Activated CD4-positive, alpha-beta memory T cell treated with anti-CD3 and anti-CD28 coated beads for 36 hours (primary cell): ENCODE measurements at regions of chr17 and their contacts with region 1.

Region 1: DNA sequence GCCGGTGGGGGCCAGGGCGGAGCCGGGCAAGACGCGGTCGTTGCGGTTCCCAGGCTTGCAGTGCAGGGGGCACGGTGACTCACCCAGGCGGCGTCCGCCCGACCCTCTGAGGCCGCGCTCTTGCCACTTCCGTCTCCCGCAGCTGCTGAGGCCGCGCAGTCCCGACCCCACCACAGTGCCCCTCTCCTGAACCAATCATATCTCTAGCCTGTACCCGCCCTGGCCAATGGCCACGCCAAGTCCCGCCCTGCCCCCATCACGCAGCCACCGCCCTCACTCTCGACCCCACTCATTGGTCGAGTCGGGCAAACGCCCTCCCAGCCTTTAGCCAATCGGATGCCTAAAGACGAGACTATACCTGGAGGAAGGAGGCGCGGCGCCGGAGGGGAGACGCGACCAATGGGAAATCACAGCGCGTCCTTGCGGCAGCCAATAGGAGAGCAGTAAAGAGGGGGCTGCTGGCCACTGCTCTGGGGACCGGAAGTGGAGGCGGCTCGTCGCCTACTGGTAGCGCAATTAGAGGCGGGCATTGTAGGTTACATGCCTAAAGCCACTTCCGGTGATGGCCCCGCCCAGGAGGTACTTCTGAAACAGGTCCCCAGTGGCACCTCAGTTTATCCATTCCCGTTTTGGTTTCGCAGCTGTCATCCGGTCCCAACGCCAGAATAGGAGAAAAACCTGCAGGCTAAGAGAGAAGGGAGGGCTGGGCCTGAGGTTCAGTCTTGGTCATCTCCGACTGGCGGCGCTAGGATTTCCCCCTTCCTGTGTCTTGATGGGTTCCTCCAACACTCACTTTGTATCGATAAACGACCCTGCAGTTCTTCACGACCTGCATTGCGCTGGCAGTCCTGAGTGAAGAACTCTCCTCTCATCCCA is 3.5 kb upstream of the MTMR4 start:
- DNase-seq: peak; percentile 100
- H3K4me3 Mint-ChIP-seq: peak overlapping the region; percentile 91
- H3K27ac Mint-ChIP-seq: peak overlapping the region; percentile 95
- H3K4me1 Mint-ChIP-seq: peaks cover 32% of the 10 kb centered on the region
- H3K27me3 Mint-ChIP-seq: no peaks in the 10 kb centered on the region

Region 2: GRCh38 chr17:58337600-58338453 is 180.1 kb before region 1 on chr17:
- CTCF ChIA-PET with region 1: no interaction called
- POLR2A ChIA-PET with region 1: interaction called, 6 read pairs
- intact Hi-C with region 1: loop called (anchors 5 kb)
- DNase-seq: peak; percentile 98
- H3K4me3 Mint-ChIP-seq: peak overlapping the region; percentile 92
- H3K27ac Mint-ChIP-seq: peak overlapping the region; percentile 98
- H3K4me1 Mint-ChIP-seq: peaks cover 22% of the 10 kb centered on the region
- H3K27me3 Mint-ChIP-seq: no peaks in the 10 kb centered on the region

Region 3: GRCh38 chr17:58487589-58488427 is 30.2 kb before region 1 on chr17 and contains the start of gene HSF5:
- CTCF ChIA-PET with region 1: interaction called, 13 read pairs
- POLR2A ChIA-PET with region 1: interaction called, 4 read pairs
- intact Hi-C with region 1: loop called (anchors 1 kb)
- DNase-seq: peak; percentile 81
- H3K4me3 Mint-ChIP-seq: peak within 1 kb of the TSS; percentile 50
- H3K27ac Mint-ChIP-seq: peak within 1 kb of the TSS; percentile 28
- H3K4me1 Mint-ChIP-seq: peaks cover 15% of the 10 kb centered on the region
- H3K27me3 Mint-ChIP-seq: no peaks in the 10 kb centered on the region
- total RNA-seq, gene HSF5: 2.9 to 3.0 TPM

Region 4: GRCh38 chr17:58648236-58648806 is 130.3 kb after region 1 on chr17:
- CTCF ChIA-PET with region 1: no interaction called
- POLR2A ChIA-PET with region 1: no interaction called
- intact Hi-C with region 1: no loop called
- DNase-seq: no peak
- H3K4me3 Mint-ChIP-seq: no peak overlapping the region
- H3K27ac Mint-ChIP-seq: no peak overlapping the region
- H3K4me1 Mint-ChIP-seq: no peaks in the 10 kb centered on the region
- H3K27me3 Mint-ChIP-seq: no peaks in the 10 kb centered on the region

Region 5: DNA sequence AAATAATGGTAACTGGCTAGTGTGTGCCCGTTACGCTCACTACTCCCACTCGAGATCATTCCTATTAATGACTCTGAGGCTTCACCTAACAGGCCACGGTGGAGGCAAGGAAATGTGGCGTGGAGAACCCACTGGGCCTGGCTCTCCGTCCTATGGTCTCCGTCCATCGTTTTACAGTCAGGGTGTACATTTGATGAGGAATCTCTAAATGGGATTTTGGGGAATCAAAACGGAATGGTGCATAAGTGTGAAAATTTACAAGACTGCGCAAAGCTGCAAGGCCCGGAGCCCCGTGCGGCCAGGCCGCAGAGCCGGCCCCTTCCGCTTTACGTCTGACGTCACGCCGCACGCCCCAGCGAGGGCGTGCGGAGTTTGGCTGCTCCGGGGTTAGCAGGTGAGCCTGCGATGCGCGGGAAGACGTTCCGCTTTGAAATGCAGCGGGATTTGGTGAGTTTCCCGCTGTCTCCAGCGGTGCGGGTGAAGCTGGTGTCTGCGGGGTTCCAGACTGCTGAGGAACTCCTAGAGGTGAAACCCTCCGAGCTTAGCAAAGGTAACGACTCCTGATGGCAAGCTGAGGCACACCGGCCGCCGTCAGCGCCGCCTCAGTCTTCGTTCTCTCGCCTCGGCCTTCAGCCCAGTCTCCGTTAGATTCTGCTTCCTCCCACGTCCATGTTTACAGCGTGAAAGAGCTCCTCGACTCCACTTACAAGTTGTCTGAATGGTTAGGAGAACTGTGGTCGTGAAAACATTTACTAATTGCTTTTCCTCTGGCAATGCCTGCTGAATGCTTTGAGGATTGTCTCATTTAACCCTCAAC is 174.5 kb after region 1 on chr17 and contains the start of gene RAD51C:
- CTCF ChIA-PET with region 1: no interaction called
- POLR2A ChIA-PET with region 1: interaction called, 4 read pairs
- intact Hi-C with region 1: loop called (anchors 2 kb)
- DNase-seq: peak; percentile 93
- H3K4me3 Mint-ChIP-seq: peak within 1 kb of the TSS; percentile 99
- H3K27ac Mint-ChIP-seq: peak within 1 kb of the TSS; percentile 96
- H3K4me1 Mint-ChIP-seq: peaks cover 25% of the 10 kb centered on the region
- H3K27me3 Mint-ChIP-seq: no peaks in the 10 kb centered on the region
- total RNA-seq, gene RAD51C: 64.0 to 66.0 TPM

Region 6: GRCh38 chr17:59106463-59107305 is 588.7 kb after region 1 on chr17 and contains the start of gene TRIM37:
- CTCF ChIA-PET with region 1: no interaction called
- POLR2A ChIA-PET with region 1: interaction called, 6 read pairs
- intact Hi-C with region 1: loop called (anchors 1 kb)
- DNase-seq: peak; percentile 100
- H3K4me3 Mint-ChIP-seq: peak within 1 kb of the TSS; percentile 98
- H3K27ac Mint-ChIP-seq: peak within 1 kb of the TSS; percentile 94
- H3K4me1 Mint-ChIP-seq: peaks cover 47% of the 10 kb centered on the region
- H3K27me3 Mint-ChIP-seq: no peaks in the 10 kb centered on the region
- total RNA-seq, gene TRIM37: 21.4 to 27.3 TPM